ENCODE measurements at regions of chr4 and their contacts with region 1.

Region 1: DNA sequence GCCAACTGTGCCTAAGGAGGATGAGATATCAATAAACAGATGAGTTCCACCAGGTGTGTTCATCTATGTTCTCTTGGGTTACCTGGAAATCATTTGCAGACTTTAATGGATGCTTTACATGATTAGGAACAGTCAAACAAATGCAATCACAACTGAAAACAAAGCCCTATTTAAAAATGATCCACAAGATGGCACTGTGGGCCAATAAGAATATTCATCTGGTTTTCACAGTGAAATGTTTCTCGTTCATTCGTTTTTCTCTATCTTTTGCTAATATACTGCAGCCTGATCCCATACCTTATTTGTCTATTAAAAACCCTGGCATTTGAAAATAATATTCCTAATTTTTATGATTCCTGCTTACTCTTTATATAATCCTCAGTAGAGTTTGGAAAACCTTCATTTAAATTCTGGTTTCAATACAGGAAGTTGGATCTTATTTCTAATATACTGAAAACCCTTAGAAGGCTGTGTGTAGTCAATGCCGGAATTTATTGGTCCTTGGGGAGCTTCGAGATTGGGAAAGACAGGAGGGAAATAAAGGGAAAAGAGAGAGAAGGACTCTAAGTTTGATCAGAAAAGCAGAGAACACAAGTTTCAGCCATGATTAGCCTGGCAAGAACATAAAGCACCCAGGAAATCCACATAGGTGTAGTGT is 63.8 kb upstream of the TAPT1 start:
- DNase-seq: no peak
- H3K4me3 Mint-ChIP-seq: no peak overlapping the region
- H3K27ac Mint-ChIP-seq: no peak overlapping the region
- H3K4me1 Mint-ChIP-seq: peaks cover 2% of the 10 kb centered on the region
- H3K27me3 Mint-ChIP-seq: no peaks in the 10 kb centered on the region

Region 2: GRCh38 chr4:16271411-16271810 is 18.6 kb before region 1 on chr4:
- CTCF ChIA-PET with region 1: no interaction called
- DNase-seq: no peak
- H3K4me3 Mint-ChIP-seq: no peak overlapping the region
- H3K27ac Mint-ChIP-seq: no peak overlapping the region
- H3K4me1 Mint-ChIP-seq: no peaks in the 10 kb centered on the region
- H3K27me3 Mint-ChIP-seq: peaks cover 16% of the 10 kb centered on the region

Region 3: GRCh38 chr4:16443504-16444088 is 153.6 kb after region 1 on chr4:
- CTCF ChIA-PET with region 1: interaction called, 11 read pairs
- DNase-seq: peak; percentile 24
- H3K4me3 Mint-ChIP-seq: no peak overlapping the region
- H3K27ac Mint-ChIP-seq: no peak overlapping the region
- H3K4me1 Mint-ChIP-seq: no peaks in the 10 kb centered on the region
- H3K27me3 Mint-ChIP-seq: no peaks in the 10 kb centered on the region

Measured in activated naive CD4-positive, alpha-beta T cell treated with anti-CD3 and anti-CD28 coated beads, Interleukin-2, amount 10 ng/mL, durations not matched to agents 7 days and 5 days (primary cell).